Right ventricle myocardium inferior (tissue), 1 donor: ENCODE measurements at regions of chr6 and their contacts with region 1.

Region 1: DNA sequence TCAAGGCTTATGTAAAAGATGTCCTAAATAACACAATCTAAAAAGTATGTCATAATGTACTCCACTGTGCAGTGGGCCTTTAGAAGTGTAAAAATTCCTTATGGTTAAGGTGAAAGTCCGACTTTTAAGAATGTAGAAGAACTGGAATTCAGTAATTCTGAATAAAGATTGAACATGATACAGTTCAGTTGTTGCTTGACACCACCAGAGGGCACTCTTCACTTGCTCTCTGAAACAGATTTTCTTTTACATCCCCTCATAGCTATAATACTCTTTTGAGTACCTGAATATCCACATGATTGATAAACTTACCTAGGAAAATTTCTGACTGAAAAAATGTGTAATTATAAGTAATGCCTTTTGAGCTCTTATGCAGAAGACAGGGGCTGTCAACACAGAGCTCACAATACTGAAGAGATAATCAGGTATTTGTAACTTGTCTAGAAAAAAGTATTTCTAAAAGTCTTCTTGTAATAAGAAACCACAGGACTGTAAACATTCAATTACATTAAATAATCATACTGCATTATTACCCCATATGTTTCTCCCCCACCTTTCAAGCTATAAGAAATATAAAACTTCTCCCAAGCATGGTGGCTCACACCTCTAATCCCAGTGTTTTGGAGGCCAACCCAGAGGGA is 92.1 kb downstream of the POPDC3 start:
- DNase-seq: no peak
- ATAC-seq: no peak

Region 2: GRCh38 chr6:105402939-105403935 is 315.5 kb after region 1 on chr6 and contains the start of gene PREP:
- intact Hi-C with region 1: loop called (anchors 1 kb)
- DNase-seq: peak; percentile 95
- ATAC-seq: peak; percentile 97
- total RNA-seq, gene PREP: 26.6 TPM

Region 3: GRCh38 chr6:105424175-105424783 is 336.6 kb after region 1 on chr6:
- intact Hi-C with region 1: loop called (anchors 2 kb)
- DNase-seq: no peak
- ATAC-seq: no peak